ENCODE measurements at regions of chr5 and their contacts with region 1.

Region 1: GRCh38 chr5:101678481-101679193 is 617.4 kb downstream of the SLCO4C1 start:
- DNase-seq: peak; percentile 83
- ATAC-seq: peak; percentile 83
- H3K4me3 ChIP-seq: no peak overlapping the region
- H3K27ac ChIP-seq: no peak overlapping the region
- H3K4me1 ChIP-seq: no peaks in the 10 kb centered on the region
- H3K27me3 ChIP-seq: no peaks in the 10 kb centered on the region
- CTCF ChIP-seq: peak; percentile 93

Region 2: DNA sequence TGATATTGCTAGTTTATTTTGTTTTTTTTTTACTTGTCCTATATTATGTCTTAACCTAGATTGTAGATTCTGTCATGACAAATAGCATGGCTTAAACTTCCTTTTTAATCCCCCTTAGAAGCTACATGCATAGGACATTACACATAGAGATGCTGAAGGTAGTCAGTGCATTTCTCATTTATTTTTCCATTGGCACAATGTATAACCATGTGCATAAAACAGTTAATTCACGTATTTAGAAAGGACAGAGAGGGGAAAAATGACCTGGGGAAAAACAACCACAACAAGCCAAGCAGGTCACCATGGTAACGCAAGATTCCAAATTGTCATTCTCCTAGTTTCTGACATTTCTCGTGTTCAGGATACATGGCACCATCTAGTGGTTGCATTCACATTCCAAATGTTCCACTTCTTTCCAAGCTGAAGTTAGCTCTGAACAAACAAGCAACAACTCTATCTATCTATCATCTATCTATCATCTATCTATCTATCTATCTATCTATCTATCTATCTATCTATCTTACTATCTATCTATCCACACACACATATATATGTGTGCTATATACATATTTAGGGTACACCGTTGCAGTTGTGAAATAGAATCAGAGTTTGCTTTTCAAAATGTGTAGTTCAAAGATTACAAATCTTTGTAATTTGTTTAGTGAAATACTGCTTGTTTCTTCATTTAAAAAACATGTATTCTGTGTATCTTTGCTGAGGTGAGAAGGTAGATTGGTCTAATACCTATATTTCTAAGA is 288.3 kb before region 1 on chr5:
- CTCF ChIA-PET with region 1: no interaction called
- POLR2A ChIA-PET with region 1: no interaction called
- intact Hi-C with region 1: loop called (anchors 10 kb)
- DNase-seq: peak; percentile 71
- ATAC-seq: peak; percentile 49
- H3K4me3 ChIP-seq: no peak overlapping the region
- H3K27ac ChIP-seq: no peak overlapping the region
- H3K4me1 ChIP-seq: no peaks in the 10 kb centered on the region
- H3K27me3 ChIP-seq: no peaks in the 10 kb centered on the region
- CTCF ChIP-seq: peak; percentile 82